ENCODE measurements at regions of chr14 and their contacts with region 1.

Region 1: DNA sequence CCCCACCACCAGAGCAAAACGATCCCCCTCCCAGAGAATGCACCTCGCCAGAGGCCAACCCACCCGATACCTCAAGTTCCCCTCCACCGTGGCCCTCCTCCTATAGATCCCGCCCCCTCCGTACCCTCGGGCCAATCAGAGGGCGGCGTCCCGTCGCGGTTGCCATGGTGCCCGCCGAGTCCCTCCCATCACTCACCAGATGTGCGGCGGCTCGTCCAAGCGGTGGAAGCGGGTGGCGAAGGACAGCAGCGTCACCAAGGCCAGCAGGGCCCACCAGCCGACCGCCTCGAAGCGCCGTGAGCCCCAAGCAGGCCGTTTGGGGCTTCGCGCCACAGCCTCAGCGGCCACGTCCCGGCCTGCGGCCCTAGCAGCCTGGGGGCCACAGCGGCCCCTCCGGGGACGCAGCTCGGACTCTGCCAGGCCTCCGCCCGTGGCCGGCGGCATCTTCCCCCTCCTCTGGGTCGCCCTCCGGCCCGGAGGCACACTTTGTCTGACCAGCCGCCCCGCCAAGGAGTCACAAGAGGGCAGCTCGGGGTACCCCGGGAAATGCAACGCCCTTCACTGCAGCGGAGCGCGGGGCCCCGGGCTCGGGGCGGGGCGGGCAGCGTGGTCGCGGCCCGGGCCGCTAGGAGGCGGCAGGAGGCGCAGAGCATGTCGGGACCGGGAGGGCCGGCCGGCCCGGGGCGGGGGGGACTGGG is at the start of gene POMT2:
- DNase-seq: peak; percentile 95
- H3K4me3 Mint-ChIP-seq: peak within 1 kb of the TSS; percentile 99
- H3K27ac Mint-ChIP-seq: peak within 1 kb of the TSS; percentile 99
- H3K4me1 Mint-ChIP-seq: peaks cover 23% of the 10 kb centered on the region
- H3K27me3 Mint-ChIP-seq: no peaks in the 10 kb centered on the region

Region 2: DNA sequence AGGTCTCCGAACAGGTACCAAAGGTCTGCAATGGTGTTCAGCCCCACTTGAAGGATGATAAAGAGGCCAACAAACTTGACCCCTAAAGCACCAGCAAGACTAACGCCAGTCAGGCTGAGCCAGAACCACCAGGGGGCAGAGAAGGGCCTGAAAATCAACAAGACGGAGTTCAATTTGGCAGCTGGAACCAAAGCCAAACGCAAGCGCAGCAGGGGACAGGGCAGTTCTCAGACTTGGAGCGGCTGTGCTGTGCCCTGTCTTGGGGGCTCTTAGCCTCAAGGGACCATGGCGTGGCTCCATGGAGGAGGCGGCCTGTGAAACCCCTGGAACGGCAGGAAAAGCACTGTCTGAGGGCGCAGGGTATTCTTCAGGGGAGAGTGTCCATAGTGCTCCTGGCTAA is 19.3 kb before region 1 on chr14:
- CTCF ChIA-PET with region 1: interaction called, 255 read pairs
- DNase-seq: peak; percentile 78
- H3K4me3 Mint-ChIP-seq: no peak overlapping the region
- H3K27ac Mint-ChIP-seq: no peak overlapping the region
- H3K4me1 Mint-ChIP-seq: peaks cover 8% of the 10 kb centered on the region
- H3K27me3 Mint-ChIP-seq: no peaks in the 10 kb centered on the region